PC-9 (cell line): ENCODE measurements at regions of chr15 and their contacts with region 1.

Region 1: DNA sequence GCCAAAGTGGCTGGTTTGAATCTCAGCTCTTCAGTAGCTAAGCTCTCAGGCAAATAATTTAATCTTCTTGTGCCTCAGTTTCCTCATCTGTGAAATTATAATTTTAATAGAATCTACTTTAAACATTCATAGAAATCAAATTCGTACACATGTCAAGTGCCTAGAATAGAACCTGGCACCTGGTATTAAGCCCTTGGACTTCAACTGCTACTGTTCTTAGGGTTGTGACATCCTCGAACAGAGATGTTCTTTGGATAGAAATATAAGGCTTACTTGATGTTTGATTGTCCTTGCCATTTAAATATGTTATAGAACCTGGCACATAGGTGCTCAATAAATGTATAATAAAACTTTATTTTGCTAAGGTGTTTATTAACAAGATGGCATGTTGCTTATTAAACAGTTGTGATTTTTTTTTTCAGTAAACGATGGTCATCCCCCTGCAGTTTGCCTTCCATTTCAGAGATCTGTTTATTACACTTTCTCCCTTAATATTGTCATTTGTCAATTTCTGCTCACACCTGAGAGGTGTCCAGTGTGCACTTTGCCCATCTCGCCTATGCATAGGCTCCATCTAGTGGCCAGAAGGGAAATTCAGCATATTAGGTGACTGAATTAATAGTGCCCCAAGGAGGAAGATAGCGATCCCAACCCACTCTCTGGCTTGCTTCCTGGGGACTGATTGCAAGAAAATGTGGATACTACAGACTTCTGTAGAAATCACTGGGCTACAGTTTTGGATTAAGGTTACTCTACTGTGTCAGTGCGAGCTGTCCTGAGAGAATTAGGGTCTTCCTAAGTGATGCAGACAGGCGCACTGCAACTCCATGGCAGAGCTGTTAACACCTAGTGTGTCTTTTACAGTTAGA is 10.7 kb downstream of the IGF1R start:
- DNase-seq: peak; percentile 35 to 47
- H3K4me3 ChIP-seq: no peak overlapping the region
- H3K27ac ChIP-seq: no peak overlapping the region
- H3K4me1 ChIP-seq: peaks cover 13% of the 10 kb centered on the region
- H3K27me3 ChIP-seq: no peaks in the 10 kb centered on the region
- CTCF ChIP-seq: peak; percentile 84

Region 2: DNA sequence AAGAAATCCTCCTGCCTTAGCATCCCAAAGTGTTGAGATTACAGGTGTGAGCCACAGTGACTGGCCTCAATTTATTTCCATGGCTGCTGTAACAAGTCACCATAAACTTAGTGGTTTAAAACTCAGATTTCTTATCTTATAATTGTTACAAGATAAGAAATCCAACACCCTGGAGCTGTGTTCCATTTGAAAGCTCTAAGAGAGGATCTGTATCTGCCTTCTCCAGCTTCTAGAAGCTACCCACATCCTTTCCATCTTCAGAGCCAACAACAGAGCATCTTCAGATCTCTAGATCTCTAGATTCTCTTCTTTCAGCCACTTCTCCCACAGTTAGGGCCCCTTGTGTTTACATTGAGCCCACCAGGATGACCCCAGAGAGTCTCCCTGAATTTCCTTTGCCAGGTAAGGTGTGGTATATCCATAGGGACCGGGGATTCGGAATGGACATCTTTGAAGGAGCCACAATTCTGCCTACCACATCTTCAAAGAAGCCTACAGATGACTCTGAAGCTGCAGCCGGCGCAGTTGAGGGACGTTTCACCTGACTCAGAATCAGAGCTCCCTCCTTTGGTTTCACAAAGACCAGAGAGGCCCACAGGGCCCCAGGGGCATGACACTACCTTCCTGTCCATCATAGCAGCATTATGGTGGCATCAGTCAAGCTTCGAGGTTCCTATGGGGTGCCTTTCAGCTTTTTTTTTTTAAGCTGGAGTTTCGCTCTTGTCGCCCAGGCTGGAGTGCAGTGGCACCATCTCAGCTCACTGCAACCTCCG is 97.7 kb before region 1 on chr15:
- CTCF ChIA-PET with region 1: no interaction called
- POLR2A ChIA-PET with region 1: interaction called, 26 read pairs
- intact Hi-C with region 1: no loop called
- DNase-seq: no peak
- H3K4me3 ChIP-seq: no peak overlapping the region
- H3K27ac ChIP-seq: no peak overlapping the region
- H3K4me1 ChIP-seq: no peaks in the 10 kb centered on the region
- H3K27me3 ChIP-seq: peaks cover 28% of the 10 kb centered on the region; the same call in 1 of the 2 replicates
- CTCF ChIP-seq: no peak

Region 3: GRCh38 chr15:98835876-98836275 is 176.8 kb after region 1 on chr15:
- CTCF ChIA-PET with region 1: interaction called, 14 read pairs
- POLR2A ChIA-PET with region 1: no interaction called
- intact Hi-C with region 1: no loop called
- DNase-seq: no peak
- H3K4me3 ChIP-seq: no peak overlapping the region
- H3K27ac ChIP-seq: no peak overlapping the region
- H3K4me1 ChIP-seq: no peaks in the 10 kb centered on the region
- H3K27me3 ChIP-seq: no peaks in the 10 kb centered on the region
- CTCF ChIP-seq: no peak

Region 4: DNA sequence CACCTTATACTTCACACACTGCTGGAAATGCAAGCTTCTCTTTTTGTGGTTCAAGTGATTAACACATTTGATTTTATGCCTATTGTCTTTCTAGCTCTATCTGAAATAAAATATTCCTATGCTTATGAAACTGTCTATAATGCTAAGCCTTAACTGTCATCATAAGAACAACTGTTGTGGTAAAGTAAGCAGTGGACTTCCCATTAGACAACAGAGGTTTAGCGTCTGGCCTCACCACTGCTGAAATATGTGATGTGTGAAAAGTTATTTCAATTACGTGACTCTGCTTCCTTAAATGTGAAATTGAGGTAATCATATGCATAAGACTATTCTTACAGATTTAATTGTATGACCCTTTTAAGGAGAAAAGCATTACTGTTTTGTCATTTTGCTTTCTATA is 1214.4 kb after region 1 on chr15:
- CTCF ChIA-PET with region 1: no interaction called
- POLR2A ChIA-PET with region 1: no interaction called
- intact Hi-C with region 1: no loop called
- DNase-seq: no peak
- H3K4me3 ChIP-seq: no peak overlapping the region
- H3K27ac ChIP-seq: no peak overlapping the region
- H3K4me1 ChIP-seq: no peaks in the 10 kb centered on the region
- H3K27me3 ChIP-seq: no peaks in the 10 kb centered on the region; the same call in none of the 2 replicates
- CTCF ChIP-seq: no peak